Naive thymus-derived CD4-positive, alpha-beta T cell (primary cell): ENCODE measurements at regions of chr9 and their contacts with region 1.

Region 1: DNA sequence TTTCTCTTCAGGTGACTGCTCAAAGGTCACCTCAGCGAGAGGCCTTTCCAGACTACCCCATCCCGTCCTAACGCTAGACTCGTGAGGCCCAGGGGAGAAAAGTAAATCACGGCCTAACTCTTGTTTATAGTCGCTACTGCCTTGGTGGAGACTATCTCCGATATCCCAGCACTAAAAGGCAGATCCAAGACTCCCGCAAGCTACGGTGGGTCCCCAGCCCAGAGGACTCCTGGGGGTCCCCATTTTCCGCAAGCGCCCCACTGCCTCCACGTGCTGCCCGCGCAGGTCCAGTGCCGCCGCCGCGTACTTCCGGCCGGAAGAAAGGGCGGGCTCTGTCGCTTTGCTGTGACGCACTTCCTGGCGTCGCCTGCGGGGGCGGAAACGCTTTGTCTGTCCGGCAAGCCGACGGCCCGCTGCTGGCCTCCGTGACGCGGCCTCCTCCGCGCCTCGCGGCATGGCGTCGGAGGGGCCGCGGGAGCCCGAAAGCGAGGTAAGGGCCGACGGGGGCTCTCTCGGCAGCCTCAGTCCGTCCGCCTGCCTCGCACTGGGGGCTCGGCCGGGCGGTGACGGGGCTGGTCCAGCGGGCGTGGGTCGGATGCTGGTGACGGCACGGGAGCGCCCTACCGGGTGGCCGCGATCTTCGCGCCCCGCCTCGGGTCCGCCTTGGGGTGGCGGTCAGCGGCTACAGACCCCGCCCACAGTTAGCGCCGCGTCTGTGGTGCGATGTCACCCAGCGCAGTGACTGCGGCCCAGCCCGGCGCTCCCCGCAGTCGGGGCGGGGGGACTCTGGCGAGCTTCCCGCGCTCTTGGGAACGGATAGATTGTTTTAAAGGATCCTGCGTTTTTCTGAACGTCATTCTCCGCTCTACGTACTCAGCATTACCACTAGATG is at the start of gene SECISBP2:
- DNase-seq: peak; percentile 90 to 97 (median 93)
- ATAC-seq: peak; percentile 94
- H3K4me3 ChIP-seq: peak within 1 kb of the TSS; percentile 78
- H3K4me3 Mint-ChIP-seq: peak within 1 kb of the TSS; percentile 83 to 96 (median 92)
- H3K27ac ChIP-seq: peak within 1 kb of the TSS; percentile 99
- H3K27ac Mint-ChIP-seq: peak within 1 kb of the TSS; percentile 92 to 99 (median 98)
- H3K4me1 ChIP-seq: peaks cover 25 to 36% of the 10 kb centered on the region in 2 donors
- H3K4me1 Mint-ChIP-seq: peaks cover 24 to 74% (median 56%) of the 10 kb centered on the region in 7 donors
- H3K27me3 ChIP-seq: no peaks in the 10 kb centered on the region
- H3K27me3 Mint-ChIP-seq: no peaks in the 10 kb centered on the region
- total RNA-seq, gene SECISBP2: 55.0 to 130 (median 109) TPM

Region 2: GRCh38 chr9:88388172-88388885 is 930.0 kb before region 1 on chr9 and contains the start of gene SPIN1:
- CTCF ChIA-PET with region 1: no interaction called
- POLR2A ChIA-PET with region 1: no interaction called
- intact Hi-C with region 1: loop called in 1 of 2 experiments (anchors 5 kb)
- DNase-seq: peak; percentile 66 to 94 (median 87)
- ATAC-seq: peak; percentile 87
- H3K4me3 ChIP-seq: peak within 1 kb of the TSS; percentile 97
- H3K4me3 Mint-ChIP-seq: peak within 1 kb of the TSS; percentile 91 to 98 (median 95)
- H3K27ac ChIP-seq: peak within 1 kb of the TSS; percentile 67
- H3K27ac Mint-ChIP-seq: peak within 1 kb of the TSS; percentile 90 to 97 (median 95)
- H3K4me1 ChIP-seq: peaks cover 8 to 11% of the 10 kb centered on the region in 2 donors
- H3K4me1 Mint-ChIP-seq: peaks cover 23 to 49% (median 43%) of the 10 kb centered on the region in 7 donors
- H3K27me3 ChIP-seq: no peaks in the 10 kb centered on the region
- H3K27me3 Mint-ChIP-seq: no peaks in the 10 kb centered on the region
- total RNA-seq, gene SPIN1: 27.5 to 38.4 (median 34.9) TPM

Region 3: GRCh38 chr9:89340332-89340731 is 22.0 kb after region 1 on chr9:
- CTCF ChIA-PET with region 1: no interaction called
- POLR2A ChIA-PET with region 1: no interaction called
- intact Hi-C with region 1: loop called in 1 of 2 experiments (anchors 2 kb)
- DNase-seq: no peak
- ATAC-seq: no peak
- H3K4me3 ChIP-seq: no peak overlapping the region
- H3K4me3 Mint-ChIP-seq: no peak overlapping the region
- H3K27ac ChIP-seq: no peak overlapping the region
- H3K27ac Mint-ChIP-seq: peak overlapping the region in 4 of 9 donors; percentile 23 to 51 (median 36)
- H3K4me1 ChIP-seq: no peaks in the 10 kb centered on the region
- H3K4me1 Mint-ChIP-seq: peaks cover 8 to 27% (median 21%) of the 10 kb centered on the region in 7 donors
- H3K27me3 ChIP-seq: no peaks in the 10 kb centered on the region
- H3K27me3 Mint-ChIP-seq: no peaks in the 10 kb centered on the region

Region 4: GRCh38 chr9:89358985-89359384 is 40.6 kb after region 1 on chr9:
- CTCF ChIA-PET with region 1: no interaction called
- POLR2A ChIA-PET with region 1: no interaction called
- intact Hi-C with region 1: no loop called
- DNase-seq: no peak
- ATAC-seq: peak; percentile 52
- H3K4me3 ChIP-seq: no peak overlapping the region
- H3K4me3 Mint-ChIP-seq: no peak overlapping the region
- H3K27ac ChIP-seq: no peak overlapping the region
- H3K27ac Mint-ChIP-seq: peak overlapping the region in 6 of 9 donors; percentile 12 to 69 (median 27)
- H3K4me1 ChIP-seq: no peaks in the 10 kb centered on the region
- H3K4me1 Mint-ChIP-seq: peaks cover 4 to 18% (median 13%) of the 10 kb centered on the region in 7 donors
- H3K27me3 ChIP-seq: no peaks in the 10 kb centered on the region
- H3K27me3 Mint-ChIP-seq: no peaks in the 10 kb centered on the region

Region 5: GRCh38 chr9:89418882-89419640 is 100.7 kb after region 1 on chr9:
- CTCF ChIA-PET with region 1: no interaction called
- POLR2A ChIA-PET with region 1: no interaction called
- intact Hi-C with region 1: loop called in 1 of 2 experiments (anchors 5 kb)
- DNase-seq: peak in 8 of 9 donors; percentile 55 to 71 (median 68)
- ATAC-seq: peak; percentile 80
- H3K4me3 ChIP-seq: peak overlapping the region; percentile 52
- H3K4me3 Mint-ChIP-seq: peak overlapping the region; percentile 73 to 87 (median 78)
- H3K27ac ChIP-seq: peak overlapping the region; percentile 66
- H3K27ac Mint-ChIP-seq: peak overlapping the region; percentile 85 to 97 (median 94)
- H3K4me1 ChIP-seq: peaks cover 57 to 77% of the 10 kb centered on the region in 2 donors
- H3K4me1 Mint-ChIP-seq: peaks cover 65 to 96% (median 92%) of the 10 kb centered on the region in 7 donors
- H3K27me3 ChIP-seq: no peaks in the 10 kb centered on the region
- H3K27me3 Mint-ChIP-seq: no peaks in the 10 kb centered on the region

Region 6: GRCh38 chr9:89497978-89498851 is 179.8 kb after region 1 on chr9 and contains the start of gene SEMA4D:
- CTCF ChIA-PET with region 1: no interaction called
- POLR2A ChIA-PET with region 1: interaction called, 3 read pairs
- intact Hi-C with region 1: loop called (anchors 5 kb)
- DNase-seq: peak in 2 of 9 donors; percentile 48 to 71
- ATAC-seq: peak; percentile 22
- H3K4me3 ChIP-seq: peak within 1 kb of the TSS; percentile 67
- H3K4me3 Mint-ChIP-seq: peak within 1 kb of the TSS; percentile 85 to 100 (median 98)
- H3K27ac ChIP-seq: peak within 1 kb of the TSS; percentile 76
- H3K27ac Mint-ChIP-seq: peak within 1 kb of the TSS; percentile 86 to 99 (median 94)
- H3K4me1 ChIP-seq: peaks cover 72 to 75% of the 10 kb centered on the region in 2 donors
- H3K4me1 Mint-ChIP-seq: peaks cover 72 to 90% (median 77%) of the 10 kb centered on the region in 7 donors
- H3K27me3 ChIP-seq: no peaks in the 10 kb centered on the region
- H3K27me3 Mint-ChIP-seq: no peaks in the 10 kb centered on the region
- total RNA-seq, gene SEMA4D: 389 to 465 (median 460) TPM

Region 7: GRCh38 chr9:89549031-89549644 is 230.8 kb after region 1 on chr9:
- CTCF ChIA-PET with region 1: interaction called, 5 read pairs
- POLR2A ChIA-PET with region 1: interaction called, 6 read pairs
- intact Hi-C with region 1: loop called (anchors 1 kb)
- DNase-seq: peak; percentile 70 to 87 (median 81)
- ATAC-seq: peak; percentile 100
- H3K4me3 ChIP-seq: no peak overlapping the region
- H3K4me3 Mint-ChIP-seq: peak overlapping the region in 7 of 10 donors; percentile 18 to 66 (median 55)
- H3K27ac ChIP-seq: peak overlapping the region; percentile 38
- H3K27ac Mint-ChIP-seq: peak overlapping the region in 7 of 9 donors; percentile 27 to 88 (median 74)
- H3K4me1 ChIP-seq: peaks cover 11 to 22% of the 10 kb centered on the region in 2 donors
- H3K4me1 Mint-ChIP-seq: peaks cover 13 to 42% (median 31%) of the 10 kb centered on the region in 7 donors
- H3K27me3 ChIP-seq: no peaks in the 10 kb centered on the region
- H3K27me3 Mint-ChIP-seq: peaks cover 0 to 21% (median 0%) of the 10 kb centered on the region in 5 donors